CD8-positive, alpha-beta T cell (primary cell): ENCODE measurements at regions of chr10 and their contacts with region 1.

Region 1: DNA sequence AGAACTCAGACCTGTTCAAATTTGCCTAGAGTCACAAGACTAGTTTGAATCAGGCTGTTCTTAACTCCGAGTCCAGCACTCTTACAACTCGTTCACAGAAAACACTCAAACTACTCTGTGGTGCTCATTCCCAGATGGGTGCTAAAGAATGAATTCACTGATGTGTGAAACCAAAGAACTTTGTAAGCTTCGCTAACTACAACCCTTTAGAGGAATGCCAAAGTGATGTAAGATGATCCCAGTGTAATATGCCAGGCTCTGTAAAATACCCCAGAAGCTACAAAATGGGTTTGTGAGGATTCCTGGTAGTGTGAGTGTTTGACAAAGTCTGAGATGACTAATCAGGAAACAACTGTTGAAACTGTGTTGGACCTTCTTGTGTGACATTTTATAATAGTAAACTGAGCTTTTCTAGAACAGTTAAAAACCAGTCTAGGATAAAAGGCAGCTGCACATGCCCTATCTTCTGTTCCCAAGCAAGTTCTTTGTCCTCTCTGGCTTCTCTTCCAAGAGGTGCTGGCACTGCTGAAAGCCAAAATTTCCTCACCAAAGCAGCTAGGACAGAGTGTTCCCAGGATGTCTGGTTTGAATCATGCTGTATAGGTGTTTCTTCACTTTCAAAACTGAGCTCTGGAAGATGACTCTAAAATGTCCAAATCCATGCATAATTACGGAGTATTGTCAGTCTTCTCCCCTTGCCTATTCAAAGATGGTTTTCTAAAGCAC is 527.6 kb downstream of the SORCS1 start:
- DNase-seq: no peak
- ATAC-seq: no peak
- H3K4me3 ChIP-seq: no peak overlapping the region
- H3K4me3 Mint-ChIP-seq: no peak overlapping the region
- H3K27ac ChIP-seq: no peak overlapping the region
- H3K27ac Mint-ChIP-seq: no peak overlapping the region
- H3K4me1 ChIP-seq: no peaks in the 10 kb centered on the region
- H3K4me1 Mint-ChIP-seq: no peaks in the 10 kb centered on the region
- H3K27me3 ChIP-seq: no peaks in the 10 kb centered on the region
- H3K27me3 Mint-ChIP-seq: no peaks in the 10 kb centered on the region
- CTCF ChIP-seq: no peak

Region 2: GRCh38 chr10:106175760-106176377 is 461.1 kb before region 1 on chr10:
- CTCF ChIA-PET with region 1: no interaction called
- POLR2A ChIA-PET with region 1: no interaction called
- intact Hi-C with region 1: no loop called
- DNase-seq: no peak
- ATAC-seq: no peak
- H3K4me3 ChIP-seq: no peak overlapping the region
- H3K4me3 Mint-ChIP-seq: no peak overlapping the region
- H3K27ac ChIP-seq: no peak overlapping the region
- H3K27ac Mint-ChIP-seq: no peak overlapping the region
- H3K4me1 ChIP-seq: no peaks in the 10 kb centered on the region
- H3K4me1 Mint-ChIP-seq: no peaks in the 10 kb centered on the region
- H3K27me3 ChIP-seq: no peaks in the 10 kb centered on the region
- H3K27me3 Mint-ChIP-seq: no peaks in the 10 kb centered on the region
- CTCF ChIP-seq: no peak

Region 3: DNA sequence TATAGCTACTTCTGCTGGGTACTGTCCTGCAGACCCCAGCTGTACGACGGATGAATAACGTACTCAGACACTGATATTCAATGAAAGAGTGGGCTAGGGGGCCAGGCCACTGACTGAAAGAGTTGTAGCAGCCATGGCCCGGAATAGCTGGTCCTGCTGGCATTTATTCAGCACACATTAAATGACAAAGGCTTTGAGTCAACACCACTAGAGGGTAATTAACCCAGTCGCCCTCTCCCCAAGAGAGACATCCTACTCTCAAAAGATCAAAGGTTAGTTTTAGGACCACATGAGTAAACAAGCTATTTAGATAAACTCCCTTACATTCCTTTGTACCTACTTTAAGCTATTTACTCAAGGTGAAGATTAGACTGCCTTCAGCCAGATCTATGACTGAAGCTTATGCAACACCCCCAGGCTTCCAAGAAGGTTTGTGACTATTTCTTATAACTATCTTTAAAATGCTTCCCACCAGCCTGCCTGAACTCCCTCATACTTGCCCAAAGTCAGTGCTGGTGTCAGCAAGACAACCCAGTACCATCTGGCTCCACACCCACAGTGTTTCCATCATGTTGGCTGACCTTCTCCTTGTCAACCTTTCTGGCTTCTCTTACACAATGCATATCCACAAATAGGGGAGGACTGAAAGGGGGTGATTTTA is 101.5 kb before region 1 on chr10:
- CTCF ChIA-PET with region 1: no interaction called
- POLR2A ChIA-PET with region 1: no interaction called
- intact Hi-C with region 1: no loop called
- DNase-seq: no peak
- ATAC-seq: no peak
- H3K4me3 ChIP-seq: no peak overlapping the region
- H3K4me3 Mint-ChIP-seq: no peak overlapping the region
- H3K27ac ChIP-seq: no peak overlapping the region
- H3K27ac Mint-ChIP-seq: no peak overlapping the region
- H3K4me1 ChIP-seq: no peaks in the 10 kb centered on the region
- H3K4me1 Mint-ChIP-seq: no peaks in the 10 kb centered on the region
- H3K27me3 ChIP-seq: no peaks in the 10 kb centered on the region
- H3K27me3 Mint-ChIP-seq: no peaks in the 10 kb centered on the region
- CTCF ChIP-seq: no peak

Region 4: GRCh38 chr10:107094824-107095522 is 458.0 kb after region 1 on chr10:
- CTCF ChIA-PET with region 1: no interaction called
- POLR2A ChIA-PET with region 1: no interaction called
- intact Hi-C with region 1: loop called in 1 of 2 experiments (anchors 5 kb)
- DNase-seq: no peak
- ATAC-seq: no peak
- H3K4me3 ChIP-seq: no peak overlapping the region
- H3K4me3 Mint-ChIP-seq: no peak overlapping the region
- H3K27ac ChIP-seq: no peak overlapping the region
- H3K27ac Mint-ChIP-seq: no peak overlapping the region
- H3K4me1 ChIP-seq: no peaks in the 10 kb centered on the region
- H3K4me1 Mint-ChIP-seq: no peaks in the 10 kb centered on the region
- H3K27me3 ChIP-seq: no peaks in the 10 kb centered on the region
- H3K27me3 Mint-ChIP-seq: no peaks in the 10 kb centered on the region
- CTCF ChIP-seq: no peak